K562 (cell line): ENCODE measurements at regions of chr3 and their contacts with region 1.

Region 1: GRCh38 chr3:158649791-158650190 is 5.5 kb downstream of the GFM1 start:
- DNase-seq: peak in 3 of 4 experiments; percentile 21 to 34 (median 22)
- ATAC-seq: peak; percentile 56
- H3K4me3 ChIP-seq: no peak overlapping the region
- H3K27ac ChIP-seq: no peak overlapping the region
- H3K4me1 ChIP-seq: peaks cover 0 to 10% of the 10 kb centered on the region in 2 experiments; a peak in 1 of 5 replicates
- H3K27me3 ChIP-seq: no peaks in the 10 kb centered on the region
- CTCF ChIP-seq: no peak
- EP300 ChIP-seq: no peak
- POLR2A ChIP-seq: no peak
- RAD21 ChIP-seq: no peak

Region 2: DNA sequence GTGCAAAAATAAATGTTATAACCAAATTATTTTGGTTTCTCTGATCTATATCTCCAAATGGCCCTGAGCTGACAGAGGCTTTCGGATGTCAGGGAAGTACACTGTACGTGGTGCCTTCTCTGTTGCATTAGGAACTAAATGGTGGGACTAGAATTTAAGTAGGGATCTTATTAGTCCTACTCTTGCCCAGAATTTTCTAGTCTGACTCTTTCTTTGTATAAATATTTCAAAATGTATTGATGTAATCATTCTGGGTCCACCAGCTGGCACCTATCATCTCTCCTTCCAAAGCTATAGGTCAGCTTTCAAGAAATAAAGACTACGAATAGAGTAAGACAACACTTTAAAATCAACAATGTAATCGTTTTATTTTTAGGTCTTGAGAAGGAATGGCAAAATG is 101.1 kb before region 1 on chr3:
- CTCF ChIA-PET with region 1: no interaction called
- POLR2A ChIA-PET with region 1: no interaction called
- in situ Hi-C with region 1: loop called (anchors 5 kb)
- intact Hi-C with region 1: no loop called
- DNase-seq: no peak
- ATAC-seq: no peak
- H3K4me3 ChIP-seq: no peak overlapping the region
- H3K27ac ChIP-seq: no peak overlapping the region
- H3K4me1 ChIP-seq: no peaks in the 10 kb centered on the region
- H3K27me3 ChIP-seq: no peaks in the 10 kb centered on the region
- CTCF ChIP-seq: no peak
- EP300 ChIP-seq: no peak
- POLR2A ChIP-seq: no peak
- RAD21 ChIP-seq: no peak

Region 3: DNA sequence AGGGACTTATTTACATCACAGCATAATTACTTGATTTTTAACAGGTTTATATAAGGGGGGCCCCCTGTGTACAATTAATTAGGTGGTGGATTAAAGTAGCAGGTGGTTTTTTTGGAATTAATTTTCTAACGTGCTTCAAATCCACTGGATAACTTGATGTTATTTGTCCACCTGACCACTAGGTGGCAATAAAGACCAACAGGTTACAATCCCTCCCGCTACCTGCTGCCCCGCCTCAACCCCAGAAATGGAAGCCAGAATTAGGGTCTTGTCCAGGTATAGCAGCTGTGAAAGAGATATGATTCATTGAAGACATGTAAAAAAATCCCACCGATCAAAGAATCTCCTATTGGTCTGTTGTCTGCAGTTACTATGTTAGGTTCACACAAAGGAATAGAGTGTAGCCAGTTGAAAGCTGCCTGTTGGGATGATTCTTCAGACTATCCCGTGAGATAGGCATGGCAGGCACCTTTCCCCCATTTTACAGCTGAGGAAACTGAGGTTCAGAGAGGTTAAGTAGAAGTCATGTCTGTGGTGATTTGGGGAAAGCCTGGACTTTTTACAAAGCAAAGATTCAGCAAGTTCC is 196.1 kb after region 1 on chr3:
- CTCF ChIA-PET with region 1: no interaction called
- POLR2A ChIA-PET with region 1: no interaction called
- in situ Hi-C with region 1: no loop called
- intact Hi-C with region 1: no loop called
- DNase-seq: peak; percentile 64 to 70 (median 70)
- ATAC-seq: peak; percentile 86
- H3K4me3 ChIP-seq: no peak overlapping the region
- H3K27ac ChIP-seq: no peak overlapping the region
- H3K4me1 ChIP-seq: no peaks in the 10 kb centered on the region
- H3K27me3 ChIP-seq: peaks cover 4 to 22% of the 10 kb centered on the region in 2 experiments; a peak in 3 of 5 replicates
- CTCF ChIP-seq: peak; percentile 68 to 80 (median 69)
- EP300 ChIP-seq: no peak
- POLR2A ChIP-seq: no peak
- RAD21 ChIP-seq: peak; percentile 73 to 82